ENCODE measurements at regions of chr4 and their contacts with region 1.

Region 1: GRCh38 chr4:20954541-20954940 is 254.3 kb downstream of the PACRGL start:
- DNase-seq: no peak
- H3K4me3 Mint-ChIP-seq: no peak overlapping the region
- H3K27ac Mint-ChIP-seq: no peak overlapping the region
- H3K4me1 Mint-ChIP-seq: no peaks in the 10 kb centered on the region
- H3K27me3 Mint-ChIP-seq: no peaks in the 10 kb centered on the region

Region 2: DNA sequence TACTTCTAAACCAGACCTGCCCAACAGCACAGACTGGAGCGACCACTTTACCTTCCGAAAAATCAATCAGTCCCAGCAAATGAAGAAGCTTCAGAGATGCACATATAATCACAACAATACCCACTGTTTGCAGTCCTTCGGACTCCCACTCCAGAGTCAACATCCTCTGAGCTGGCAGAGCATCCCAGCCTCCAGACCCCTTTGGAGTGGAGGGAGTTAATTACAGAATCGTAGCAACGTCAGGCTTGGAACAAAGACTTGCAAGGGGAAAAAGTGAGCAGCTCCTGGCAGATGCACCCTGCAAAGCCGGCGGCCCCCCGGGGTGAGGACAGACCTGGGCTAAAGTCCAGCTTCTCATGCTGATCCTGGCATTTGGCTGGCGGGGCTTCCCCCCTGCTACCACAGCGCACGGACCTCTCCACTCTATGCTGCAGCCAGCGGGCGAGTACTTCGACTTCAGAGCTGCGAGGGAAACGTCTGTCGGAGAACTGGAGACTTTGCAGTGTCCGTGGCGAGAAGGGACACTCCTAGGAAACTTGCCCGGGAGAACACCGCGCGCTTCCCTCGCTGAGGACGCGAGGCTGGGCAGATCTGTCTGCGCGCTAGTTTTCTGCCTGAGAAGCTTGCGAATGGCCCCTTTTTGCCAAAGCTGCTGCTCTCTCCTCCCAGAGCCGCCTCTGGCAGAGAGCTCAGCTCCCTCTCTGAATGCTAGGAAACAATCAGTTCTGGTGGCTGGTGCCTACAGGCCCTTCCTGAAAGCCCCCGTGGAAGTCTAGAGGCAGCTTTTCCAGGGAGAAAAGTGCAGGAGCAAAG is 29.4 kb after region 1 on chr4:
- intact Hi-C with region 1: loop called (anchors 1 kb)
- DNase-seq: no peak
- H3K4me3 Mint-ChIP-seq: no peak overlapping the region
- H3K27ac Mint-ChIP-seq: no peak overlapping the region
- H3K4me1 Mint-ChIP-seq: no peaks in the 10 kb centered on the region
- H3K27me3 Mint-ChIP-seq: no peaks in the 10 kb centered on the region

Region 3: DNA sequence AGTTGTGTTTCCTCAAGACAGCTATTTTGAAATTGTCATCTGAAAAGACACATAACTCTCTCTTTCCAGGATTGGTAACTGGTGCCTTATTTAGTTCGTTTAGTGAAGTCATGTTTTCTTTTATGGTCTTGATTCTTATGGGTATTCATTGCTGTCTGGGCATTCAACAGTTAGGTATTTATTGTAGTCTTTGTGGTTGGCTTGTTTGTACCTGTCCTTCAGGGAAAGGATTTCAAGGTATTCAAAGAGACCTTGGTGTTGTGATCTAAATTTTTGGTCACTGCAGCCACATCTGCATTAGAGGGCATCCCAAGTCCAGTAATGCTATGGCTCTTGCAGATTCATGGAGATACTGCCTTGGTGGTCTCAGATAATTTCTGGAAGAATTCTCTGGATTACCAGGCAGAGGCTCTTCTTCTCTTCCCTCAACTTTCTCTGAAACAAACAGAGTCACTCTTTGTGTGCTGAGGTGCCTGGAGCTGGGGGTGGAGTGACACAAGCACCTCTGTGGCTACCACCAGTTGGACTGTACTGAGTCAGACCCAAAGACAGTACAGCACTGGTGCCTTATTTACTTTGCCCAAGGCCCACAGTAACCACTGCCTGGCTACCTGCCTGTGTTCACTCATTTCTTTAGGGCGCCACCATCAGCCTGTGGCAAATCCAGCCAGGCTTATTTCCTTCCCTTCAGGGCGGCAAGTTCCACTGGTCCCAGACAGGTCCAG is 373.6 kb after region 1 on chr4:
- intact Hi-C with region 1: no loop called
- DNase-seq: no peak
- H3K4me3 Mint-ChIP-seq: no peak overlapping the region
- H3K27ac Mint-ChIP-seq: no peak overlapping the region
- H3K4me1 Mint-ChIP-seq: no peaks in the 10 kb centered on the region
- H3K27me3 Mint-ChIP-seq: no peaks in the 10 kb centered on the region